Left lung (tissue), 14 donors: ENCODE measurements at regions of chr13 and their contacts with region 1.

Region 1: GRCh38 chr13:41137951-41138350 is 5.3 kb upstream of the KBTBD6 start:
- DNase-seq: no peak
- ATAC-seq: no peak
- H3K4me3 ChIP-seq: no peak overlapping the region
- H3K27ac ChIP-seq: no peak overlapping the region
- H3K4me1 ChIP-seq: peaks cover 0 to 8% of the 10 kb centered on the region in 2 donors
- H3K27me3 ChIP-seq: no peaks in the 10 kb centered on the region
- CTCF ChIP-seq: no peak

Region 2: DNA sequence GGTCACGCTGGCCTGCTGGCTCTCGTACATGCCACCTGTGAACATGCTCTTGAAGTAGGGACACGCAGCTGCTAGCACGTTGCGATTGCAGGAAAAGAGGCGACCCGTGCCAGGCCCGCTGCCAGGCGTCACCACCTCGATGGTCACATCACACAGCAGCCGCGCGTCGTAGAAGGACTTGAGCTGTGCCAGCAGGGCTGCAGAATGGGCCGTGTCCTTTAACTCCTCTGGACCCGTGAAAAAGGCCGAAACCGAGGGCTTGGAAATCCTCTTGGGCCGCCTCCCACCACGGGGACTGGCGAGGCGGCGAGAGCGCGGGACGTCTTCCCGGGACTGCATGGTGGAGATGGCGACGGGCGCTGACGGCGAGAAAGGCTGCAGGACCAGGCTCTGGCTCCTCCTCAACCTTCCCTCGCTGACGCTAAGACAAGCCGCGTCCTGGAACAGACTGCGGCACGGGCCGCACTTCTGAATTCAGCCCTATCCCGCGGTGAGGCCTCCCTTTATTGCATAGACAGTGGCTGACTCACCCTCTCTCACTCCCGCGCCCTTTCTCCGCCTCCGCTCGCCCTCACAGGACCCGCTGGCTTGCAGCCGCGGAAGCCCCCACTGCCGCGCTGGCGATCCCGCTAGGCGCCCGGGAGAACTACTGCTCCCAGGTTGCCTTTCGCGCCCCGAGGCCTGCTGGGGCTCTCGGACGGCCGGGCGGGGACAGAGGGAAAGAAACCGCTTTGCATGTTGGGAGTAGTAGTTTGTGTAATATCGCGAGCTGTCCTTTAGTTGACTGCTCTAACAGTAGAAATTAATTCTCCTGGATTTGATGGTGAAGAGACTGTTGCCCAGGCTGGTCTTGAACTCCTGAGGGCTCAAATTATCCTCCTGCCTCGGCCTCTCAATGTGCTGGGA is 56.2 kb after region 1 on chr13 and contains the start of gene KBTBD7:
- intact Hi-C with region 1: loop called in 1 of 2 experiments (anchors 5 kb)
- DNase-seq: peak; percentile 90 to 99 (median 96)
- ATAC-seq: peak; percentile 99
- H3K4me3 ChIP-seq: peak within 1 kb of the TSS; percentile 66 to 67
- H3K27ac ChIP-seq: peak within 1 kb of the TSS; percentile 92 to 95
- H3K4me1 ChIP-seq: peaks cover 4 to 29% of the 10 kb centered on the region in 2 donors
- H3K27me3 ChIP-seq: no peaks in the 10 kb centered on the region
- CTCF ChIP-seq: no peak
- polyA plus RNA-seq, gene KBTBD7: 15.2 to 19.2 (median 17.7) TPM